ENCODE measurements at regions of chr7 and their contacts with region 1.

Region 1: DNA sequence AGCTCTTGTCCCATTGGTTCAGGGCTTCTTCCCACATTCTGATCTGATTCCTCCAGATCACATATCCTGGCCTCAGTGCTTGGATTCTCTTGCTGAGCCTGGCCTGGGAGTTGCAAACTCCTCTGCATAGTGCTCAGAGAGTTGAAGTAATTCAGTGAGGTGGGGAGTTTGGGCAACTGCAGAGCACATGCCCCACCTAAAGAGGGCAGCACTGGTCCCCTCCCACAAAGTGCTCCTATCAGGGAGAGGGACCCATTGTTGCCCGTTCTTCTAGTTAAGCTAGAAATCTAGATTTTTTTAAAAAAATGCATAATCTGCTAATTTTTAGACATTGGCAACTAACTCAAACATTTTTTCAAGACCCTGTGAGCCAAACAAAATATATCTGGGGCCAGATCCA is 45.1 kb downstream of the CHN2 start:
- DNase-seq: peak; percentile 28
- ATAC-seq: no peak
- H3K4me3 Mint-ChIP-seq: no peak overlapping the region
- H3K27ac Mint-ChIP-seq: no peak overlapping the region
- H3K4me1 Mint-ChIP-seq: peaks cover 20% of the 10 kb centered on the region
- H3K27me3 Mint-ChIP-seq: no peaks in the 10 kb centered on the region
- CTCF ChIP-seq: peak; percentile 55

Region 2: DNA sequence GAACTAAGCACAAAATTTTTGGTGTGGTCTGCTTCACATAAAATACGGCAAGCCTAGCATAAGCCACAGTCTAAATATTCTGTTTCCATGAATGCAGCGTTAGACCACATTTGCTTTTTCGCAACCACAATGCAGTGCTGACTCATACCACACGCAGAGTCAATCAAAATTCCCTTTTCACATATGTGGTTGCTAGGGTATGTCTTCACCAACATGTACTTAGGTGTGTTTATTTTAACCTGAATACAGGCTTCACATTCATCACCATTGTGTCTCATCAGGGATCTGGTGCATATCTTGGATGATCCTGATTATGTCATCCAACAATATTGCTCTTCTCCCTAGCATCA is 45.8 kb after region 1 on chr7:
- CTCF ChIA-PET with region 1: interaction called, 3 read pairs
- POLR2A ChIA-PET with region 1: no interaction called
- intact Hi-C with region 1: loop called (anchors 5 kb)
- DNase-seq: peak; percentile 79
- ATAC-seq: peak; percentile 83
- H3K4me3 Mint-ChIP-seq: no peak overlapping the region
- H3K27ac Mint-ChIP-seq: no peak overlapping the region
- H3K4me1 Mint-ChIP-seq: peaks cover 32% of the 10 kb centered on the region
- H3K27me3 Mint-ChIP-seq: peaks cover 6% of the 10 kb centered on the region
- CTCF ChIP-seq: no peak

Measured in activated CD8-positive, alpha-beta T cell treated with anti-CD3 and anti-CD28 coated beads for 36 hours (primary cell).